ENCODE measurements at regions of chr20 and their contacts with region 1.

Region 1: DNA sequence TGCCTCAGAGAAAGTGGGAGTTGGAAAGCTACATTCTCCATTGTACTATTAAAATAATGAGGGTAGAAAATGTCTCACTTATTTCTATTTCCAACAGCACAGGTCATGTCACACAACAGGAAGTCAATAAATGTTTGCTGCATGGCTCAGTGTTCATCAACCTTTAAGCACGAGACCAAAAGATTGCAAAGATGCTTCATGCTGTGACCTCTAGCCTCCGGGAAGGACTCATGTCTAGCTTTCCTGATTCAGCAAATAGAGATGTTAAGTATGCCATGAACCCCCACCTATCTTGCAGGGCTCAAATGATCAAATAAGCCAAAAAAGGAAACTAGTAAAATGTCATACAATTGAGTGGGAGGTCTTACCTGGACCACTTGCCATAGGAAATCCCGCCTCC is 57.4 kb downstream of the NCOA6 start:
- DNase-seq: peak; percentile 33
- H3K4me3 ChIP-seq: no peak overlapping the region
- CTCF ChIP-seq: no peak

Region 2: DNA sequence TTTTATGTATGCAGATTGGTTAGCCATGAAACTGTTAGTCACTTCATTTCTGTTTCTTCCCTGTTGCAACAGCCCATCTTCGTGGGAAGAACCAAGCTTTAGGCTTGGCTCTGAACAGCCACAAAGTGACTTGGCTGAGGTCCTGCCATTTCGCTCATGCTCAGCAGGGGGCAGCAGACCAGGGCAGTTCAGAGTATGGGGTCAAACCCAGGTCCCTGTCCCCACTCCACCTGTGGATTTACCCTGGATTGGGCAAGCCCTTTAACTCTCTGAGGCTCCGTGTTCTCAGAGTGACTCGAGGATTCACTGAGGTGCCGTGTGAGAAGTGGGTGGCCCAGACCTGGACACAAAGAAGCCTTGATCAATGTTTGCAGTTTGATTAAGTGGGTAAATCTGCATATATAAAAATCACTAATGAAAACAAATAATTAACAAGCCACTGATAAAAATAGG is 229.4 kb before region 1 on chr20:
- CTCF ChIA-PET with region 1: interaction called, 26 read pairs
- POLR2A ChIA-PET with region 1: no interaction called
- DNase-seq: no peak
- H3K4me3 ChIP-seq: no peak overlapping the region
- CTCF ChIP-seq: peak; percentile 89

Region 3: GRCh38 chr20:34579191-34579978 is 188.7 kb before region 1 on chr20:
- CTCF ChIA-PET with region 1: interaction called, 102 read pairs
- POLR2A ChIA-PET with region 1: no interaction called
- DNase-seq: no peak
- H3K4me3 ChIP-seq: no peak overlapping the region
- CTCF ChIP-seq: peak; percentile 73

Region 4: DNA sequence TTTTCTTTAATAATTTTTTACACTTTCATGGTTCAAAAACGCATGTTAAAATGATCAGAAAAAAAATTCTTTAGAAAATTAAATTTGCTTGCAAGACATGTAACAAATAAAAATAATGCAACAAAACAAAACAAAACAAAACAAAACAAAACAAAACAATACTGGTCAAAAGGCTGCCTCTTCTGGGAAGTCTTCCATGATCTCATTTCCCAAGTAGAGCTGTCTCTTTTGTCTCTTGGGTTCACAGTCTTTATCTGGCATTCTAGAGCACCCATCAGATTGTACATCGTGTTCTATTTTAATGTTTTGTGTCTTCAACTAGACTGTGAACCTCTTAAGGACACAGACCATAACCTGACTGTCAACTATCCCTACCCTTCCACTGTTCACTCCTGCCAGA is 38.7 kb before region 1 on chr20:
- CTCF ChIA-PET with region 1: interaction called, 11 read pairs
- POLR2A ChIA-PET with region 1: no interaction called
- DNase-seq: no peak
- H3K4me3 ChIP-seq: no peak overlapping the region
- CTCF ChIP-seq: no peak

Region 5: GRCh38 chr20:34747479-34747878 is 20.6 kb before region 1 on chr20:
- CTCF ChIA-PET with region 1: interaction called, 15 read pairs
- POLR2A ChIA-PET with region 1: no interaction called
- DNase-seq: no peak
- H3K4me3 ChIP-seq: no peak overlapping the region
- CTCF ChIP-seq: no peak

Region 6: GRCh38 chr20:34781220-34781619 is 13.1 kb after region 1 on chr20:
- CTCF ChIA-PET with region 1: interaction called, 51 read pairs
- POLR2A ChIA-PET with region 1: no interaction called
- DNase-seq: no peak
- H3K4me3 ChIP-seq: no peak overlapping the region
- CTCF ChIP-seq: no peak

Region 7: DNA sequence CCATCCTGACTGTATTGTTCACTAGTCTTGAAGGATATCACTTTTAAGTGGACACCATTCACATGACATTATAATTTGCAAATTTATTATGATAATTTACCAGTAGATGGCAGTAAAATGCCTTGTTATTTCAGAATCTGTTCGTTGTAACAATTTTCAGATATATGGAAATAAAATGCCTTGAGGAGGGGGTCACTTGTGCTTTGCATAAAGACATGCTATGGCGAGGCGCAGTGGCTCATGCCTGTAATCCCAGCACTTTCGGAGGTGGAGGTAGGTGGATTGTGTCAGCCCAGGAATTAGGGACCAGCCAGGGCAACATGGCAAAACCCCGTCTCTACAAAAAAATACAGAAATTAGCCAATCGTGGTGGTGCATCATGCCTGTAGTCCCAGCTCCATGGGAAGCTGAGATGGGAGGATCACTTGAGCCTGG is 66.4 kb after region 1 on chr20:
- CTCF ChIA-PET with region 1: no interaction called
- POLR2A ChIA-PET with region 1: no interaction called
- DNase-seq: peak; percentile 0
- H3K4me3 ChIP-seq: no peak overlapping the region
- CTCF ChIP-seq: no peak